ENCODE measurements at regions of chr16 and their contacts with region 1.

Region 1: GRCh38 chr16:5071681-5072333 is at the start of gene ALG1:
- DNase-seq: peak; percentile 80
- H3K4me3 Mint-ChIP-seq: peak within 1 kb of the TSS; percentile 95
- H3K27ac Mint-ChIP-seq: peak within 1 kb of the TSS; percentile 94
- H3K4me1 Mint-ChIP-seq: peaks cover 5% of the 10 kb centered on the region
- H3K27me3 Mint-ChIP-seq: no peaks in the 10 kb centered on the region
- CTCF ChIP-seq: no peak
- total RNA-seq, gene ALG1: 28.5 and 29.1 TPM in 2 replicates

Region 2: DNA sequence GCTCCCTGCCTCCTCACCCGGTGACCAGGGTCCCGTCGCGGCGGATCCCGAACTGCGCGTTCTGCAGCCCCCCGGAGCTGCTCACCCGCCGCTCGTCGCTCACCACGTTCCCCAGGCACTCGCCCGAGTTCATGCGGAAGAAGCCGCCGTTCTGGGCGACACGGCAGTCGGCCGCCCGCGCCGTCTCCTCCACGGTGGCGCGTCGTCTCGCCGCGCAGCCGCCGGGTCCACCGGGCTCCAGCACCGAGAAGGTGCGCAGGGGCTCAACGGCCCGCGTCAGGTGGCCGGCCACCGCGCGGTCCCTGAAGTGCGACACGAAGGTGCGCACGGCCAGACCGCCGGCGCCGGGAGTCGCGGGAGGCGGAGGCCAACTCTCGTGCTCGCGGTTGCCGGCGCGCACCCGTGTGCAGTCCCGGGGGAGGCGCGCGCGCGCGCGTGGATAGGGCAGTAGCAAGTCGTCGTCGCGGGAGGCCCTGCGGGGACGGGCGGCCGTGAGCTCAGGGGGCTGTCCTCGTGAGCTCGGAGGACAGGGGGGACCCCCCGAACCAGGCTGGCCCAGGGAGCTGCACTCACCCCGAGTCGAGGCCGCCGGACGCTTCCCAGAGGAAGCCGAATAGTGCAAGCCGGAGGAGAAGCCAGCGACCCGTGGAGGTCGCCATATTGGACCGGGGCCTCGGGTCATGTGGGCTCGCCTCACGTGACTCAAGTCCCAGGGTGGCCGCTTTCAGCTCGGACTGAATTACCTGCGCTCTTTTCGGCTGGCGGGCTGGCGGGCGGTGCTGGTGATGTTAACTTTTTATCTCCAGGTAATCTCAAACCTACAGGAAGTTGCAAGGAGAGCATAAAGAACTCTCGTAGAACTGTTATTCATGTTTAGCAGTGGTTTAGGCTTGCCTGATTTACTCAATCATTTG is 38.3 kb before region 1 on chr16 and contains the start of gene NAGPA:
- CTCF ChIA-PET with region 1: interaction called, 3 read pairs
- POLR2A ChIA-PET with region 1: interaction called, 13 read pairs
- intact Hi-C with region 1: no loop called
- DNase-seq: peak; percentile 82
- H3K4me3 Mint-ChIP-seq: peak within 1 kb of the TSS; percentile 84
- H3K27ac Mint-ChIP-seq: peak within 1 kb of the TSS; percentile 73
- H3K4me1 Mint-ChIP-seq: peaks cover 21% of the 10 kb centered on the region
- H3K27me3 Mint-ChIP-seq: no peaks in the 10 kb centered on the region
- CTCF ChIP-seq: no peak
- total RNA-seq, gene NAGPA: 4.9 and 8.7 TPM in 2 replicates